ENCODE measurements at regions of chrX and their contacts with region 1.

Region 1: DNA sequence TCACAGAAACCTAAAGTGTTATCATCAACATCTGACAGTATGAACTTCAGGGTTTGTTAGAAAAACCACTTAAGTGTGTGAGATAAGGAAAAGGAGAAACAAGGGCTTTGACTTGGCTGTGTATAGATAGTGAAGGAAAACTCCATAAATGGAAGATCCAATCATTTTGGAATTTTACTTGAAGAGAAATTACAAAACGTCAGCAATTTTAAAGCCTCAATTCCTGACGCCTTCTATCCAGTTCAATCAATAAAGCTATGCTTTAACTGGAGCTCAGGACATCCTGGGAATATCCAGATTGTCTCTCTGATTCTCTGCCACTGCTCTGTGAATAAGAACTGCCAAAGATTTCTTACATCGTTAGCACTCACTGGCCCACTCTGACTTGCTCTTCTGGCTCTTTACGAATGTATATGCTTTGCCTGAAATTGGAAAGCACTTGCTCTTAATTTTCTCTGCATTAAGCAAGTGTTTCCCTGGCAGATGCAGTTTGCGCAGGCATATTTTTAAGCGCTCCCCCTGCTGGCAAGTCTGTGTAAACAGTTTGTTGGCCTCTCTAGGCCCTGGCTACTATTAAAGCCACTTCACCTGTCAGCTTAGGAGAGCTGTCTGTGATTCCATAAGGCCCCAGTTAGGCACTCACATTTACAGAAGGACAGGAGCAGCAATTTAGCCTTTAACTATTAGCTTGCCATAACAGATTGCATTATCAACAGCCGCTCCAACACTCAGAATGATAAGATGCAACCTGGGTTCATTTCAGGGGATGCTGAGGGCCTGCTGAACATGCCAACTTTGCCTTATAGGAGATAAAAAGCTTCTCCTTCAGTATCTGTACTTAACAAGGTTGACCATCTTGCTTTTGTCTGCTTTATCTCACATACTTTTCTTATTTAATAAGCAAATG is 251.4 kb upstream of the DDX53 start:
- H3K4me3 Mint-ChIP-seq: no peak overlapping the region
- H3K27ac Mint-ChIP-seq: no peak overlapping the region
- H3K4me1 Mint-ChIP-seq: no peaks in the 10 kb centered on the region
- H3K27me3 Mint-ChIP-seq: no peaks in the 10 kb centered on the region

Region 2: GRCh38 chrX:21985332-21985777 is 763.0 kb before region 1 on chrX:
- intact Hi-C with region 1: loop called (anchors 5 kb)
- H3K4me3 Mint-ChIP-seq: no peak overlapping the region
- H3K27ac Mint-ChIP-seq: no peak overlapping the region
- H3K4me1 Mint-ChIP-seq: peaks cover 7% of the 10 kb centered on the region
- H3K27me3 Mint-ChIP-seq: no peaks in the 10 kb centered on the region

Region 3: DNA sequence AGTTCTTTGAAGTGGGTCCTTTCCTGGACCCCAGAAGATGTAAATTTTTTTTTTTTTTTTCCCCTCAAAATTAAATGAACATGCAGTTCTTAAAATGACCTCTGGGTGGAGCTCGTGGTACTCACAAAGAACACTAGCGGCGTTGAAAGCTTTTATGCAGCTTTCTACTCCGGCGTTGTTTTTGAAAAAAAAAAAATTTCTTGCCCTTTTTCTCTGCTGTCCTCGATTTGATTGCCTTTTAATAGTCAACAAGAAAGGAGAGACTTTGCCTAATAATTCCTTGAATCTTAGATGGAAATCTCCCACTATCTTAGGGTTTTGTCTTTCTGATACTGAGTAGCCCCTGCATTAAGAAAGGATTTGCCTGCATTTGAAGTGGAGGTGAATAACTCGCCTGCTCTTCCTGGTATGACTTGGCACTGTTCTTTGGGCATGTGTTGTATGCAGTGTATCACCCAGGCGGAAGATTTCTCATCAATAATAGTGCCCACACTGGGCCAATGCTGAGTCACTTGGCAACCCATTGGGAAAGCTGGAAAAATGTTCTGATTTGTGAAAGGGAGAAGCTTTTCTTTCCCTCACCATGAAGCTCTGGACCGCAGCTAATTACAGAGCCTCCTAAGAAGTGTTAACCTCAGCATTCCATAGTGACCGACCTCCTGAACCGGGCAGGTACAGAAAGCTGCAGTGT is 612.2 kb before region 1 on chrX:
- intact Hi-C with region 1: loop called (anchors 10 kb)
- H3K4me3 Mint-ChIP-seq: no peak overlapping the region
- H3K27ac Mint-ChIP-seq: no peak overlapping the region
- H3K4me1 Mint-ChIP-seq: no peaks in the 10 kb centered on the region
- H3K27me3 Mint-ChIP-seq: peaks cover 1% of the 10 kb centered on the region

Measured in dendritic cell treated with granulocyte-macrophage colony-stimulating factor and Interleukin-4, amounts not matched to agents 40 ng/mL and 50 ng/mL, for 4 days (primary cell).